Heart left ventricle (tissue), 16 donors: ENCODE measurements at regions of chr6 and their contacts with region 1.

Region 1: DNA sequence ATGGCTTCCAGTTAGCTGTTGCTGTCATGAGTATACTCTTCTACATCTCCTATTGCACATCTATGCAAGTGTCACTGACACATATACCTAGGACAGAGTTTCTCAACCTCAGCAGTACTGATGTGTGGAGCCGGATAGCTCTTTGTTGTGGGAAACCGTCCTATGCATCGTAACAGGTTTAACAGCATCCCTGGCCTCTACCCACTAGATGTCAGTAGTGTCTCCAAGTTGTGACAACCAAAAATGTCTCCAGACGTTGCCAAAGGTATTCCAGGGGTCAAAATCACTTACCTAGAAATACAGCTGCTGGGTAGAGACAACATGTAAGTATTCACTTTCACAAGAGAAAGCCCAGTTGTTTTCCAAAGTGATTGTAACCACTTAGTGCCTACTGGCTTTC is 637.6 kb downstream of the RNF144B start:
- DNase-seq: no peak
- ATAC-seq: peak; percentile 61 to 88 (median 71)
- H3K4me3 ChIP-seq: no peak overlapping the region
- H3K27ac ChIP-seq: no peak overlapping the region
- H3K4me1 ChIP-seq: peaks cover 0 to 3% (median 0%) of the 10 kb centered on the region in 12 donors
- H3K27me3 ChIP-seq: no peaks in the 10 kb centered on the region
- CTCF ChIP-seq: peak; percentile 13 to 68 (median 52)
- POLR2A ChIP-seq: no peak

Region 2: GRCh38 chr6:19204443-19204842 is 179.7 kb after region 1 on chr6:
- intact Hi-C with region 1: loop called in 3 of 10 experiments (anchors 10 kb)
- DNase-seq: no peak
- ATAC-seq: no peak
- H3K4me3 ChIP-seq: no peak overlapping the region
- H3K27ac ChIP-seq: no peak overlapping the region
- H3K4me1 ChIP-seq: no peaks in the 10 kb centered on the region
- H3K27me3 ChIP-seq: no peaks in the 10 kb centered on the region
- CTCF ChIP-seq: no peak
- POLR2A ChIP-seq: no peak

Region 3: DNA sequence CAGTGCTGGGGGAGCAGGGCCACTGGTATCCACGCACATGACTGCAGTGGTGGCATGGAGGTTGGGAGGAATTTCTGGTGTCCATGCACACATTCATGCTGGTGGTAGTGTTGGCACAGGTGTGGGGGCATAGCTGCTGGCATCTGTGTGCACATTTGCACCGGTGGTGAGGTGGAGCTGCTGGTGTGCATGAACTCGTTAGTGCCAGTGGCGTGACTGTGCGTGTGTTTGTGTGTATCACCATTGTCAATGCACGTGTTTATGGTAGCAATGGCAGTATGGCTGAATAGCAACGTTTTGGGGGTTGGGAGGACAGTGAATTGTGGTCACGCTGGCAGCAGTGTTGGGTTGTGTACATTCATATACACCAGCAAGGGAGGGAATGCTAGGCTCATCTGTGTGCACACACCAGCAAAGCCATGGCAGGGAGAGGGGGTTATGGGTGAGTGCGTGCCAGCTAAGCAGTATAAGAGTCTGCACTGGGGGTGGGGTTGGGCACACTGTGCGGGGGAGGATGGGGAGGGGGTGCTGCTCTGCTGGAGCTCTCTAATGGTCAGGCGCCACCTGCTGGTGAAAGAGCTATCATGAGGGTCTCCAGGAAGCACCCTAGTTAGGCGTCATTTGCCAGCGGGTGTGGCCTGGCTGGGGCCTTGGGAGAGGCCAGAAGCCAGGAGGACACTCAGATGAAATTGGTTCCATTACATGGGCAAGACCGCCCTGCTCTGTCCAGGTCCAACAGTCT is 186.3 kb after region 1 on chr6:
- intact Hi-C with region 1: loop called (anchors 2 to 10 kb)
- DNase-seq: peak in 4 of 5 donors; percentile 22 to 51 (median 39)
- ATAC-seq: peak in 1 of 4 donors; percentile 42
- H3K4me3 ChIP-seq: no peak overlapping the region
- H3K27ac ChIP-seq: no peak overlapping the region
- H3K4me1 ChIP-seq: no peaks in the 10 kb centered on the region
- H3K27me3 ChIP-seq: no peaks in the 10 kb centered on the region
- CTCF ChIP-seq: peak; percentile 17 to 56 (median 36)
- POLR2A ChIP-seq: no peak

Region 4: GRCh38 chr6:20044883-20045282 is 1020.1 kb after region 1 on chr6:
- intact Hi-C with region 1: loop called in 4 of 10 experiments (anchors 5 to 10 kb)
- DNase-seq: no peak
- ATAC-seq: no peak
- H3K4me3 ChIP-seq: no peak overlapping the region
- H3K27ac ChIP-seq: no peak overlapping the region
- H3K4me1 ChIP-seq: no peaks in the 10 kb centered on the region
- H3K27me3 ChIP-seq: no peaks in the 10 kb centered on the region
- CTCF ChIP-seq: no peak
- POLR2A ChIP-seq: no peak